CD8-positive, alpha-beta T cell (primary cell): ENCODE measurements at regions of chr20 and their contacts with region 1.

Region 1: GRCh38 chr20:21235484-21236445 is 67.4 kb upstream of the XRN2 start:
- DNase-seq: peak; percentile 18 to 70 (median 63)
- ATAC-seq: peak; percentile 68
- H3K4me3 ChIP-seq: no peak overlapping the region
- H3K4me3 Mint-ChIP-seq: no peak overlapping the region
- H3K27ac ChIP-seq: no peak overlapping the region
- H3K27ac Mint-ChIP-seq: no peak overlapping the region
- H3K4me1 ChIP-seq: no peaks in the 10 kb centered on the region
- H3K4me1 Mint-ChIP-seq: peaks cover 4% of the 10 kb centered on the region
- H3K27me3 ChIP-seq: no peaks in the 10 kb centered on the region
- H3K27me3 Mint-ChIP-seq: no peaks in the 10 kb centered on the region
- CTCF ChIP-seq: peak; percentile 94

Region 2: GRCh38 chr20:21219686-21220085 is 16.1 kb before region 1 on chr20:
- CTCF ChIA-PET with region 1: interaction called, 21 read pairs
- POLR2A ChIA-PET with region 1: no interaction called
- intact Hi-C with region 1: no loop called
- DNase-seq: no peak
- ATAC-seq: no peak
- H3K4me3 ChIP-seq: no peak overlapping the region
- H3K4me3 Mint-ChIP-seq: no peak overlapping the region
- H3K27ac ChIP-seq: no peak overlapping the region
- H3K27ac Mint-ChIP-seq: no peak overlapping the region
- H3K4me1 ChIP-seq: no peaks in the 10 kb centered on the region
- H3K4me1 Mint-ChIP-seq: no peaks in the 10 kb centered on the region
- H3K27me3 ChIP-seq: no peaks in the 10 kb centered on the region
- H3K27me3 Mint-ChIP-seq: no peaks in the 10 kb centered on the region
- CTCF ChIP-seq: no peak

Region 3: GRCh38 chr20:21246161-21246560 is 10.4 kb after region 1 on chr20:
- CTCF ChIA-PET with region 1: interaction called, 13 read pairs
- POLR2A ChIA-PET with region 1: interaction called, 3 read pairs
- intact Hi-C with region 1: no loop called
- DNase-seq: no peak
- ATAC-seq: no peak
- H3K4me3 ChIP-seq: no peak overlapping the region
- H3K4me3 Mint-ChIP-seq: no peak overlapping the region
- H3K27ac ChIP-seq: no peak overlapping the region
- H3K27ac Mint-ChIP-seq: no peak overlapping the region
- H3K4me1 ChIP-seq: no peaks in the 10 kb centered on the region
- H3K4me1 Mint-ChIP-seq: no peaks in the 10 kb centered on the region
- H3K27me3 ChIP-seq: no peaks in the 10 kb centered on the region
- H3K27me3 Mint-ChIP-seq: no peaks in the 10 kb centered on the region
- CTCF ChIP-seq: no peak

Region 4: DNA sequence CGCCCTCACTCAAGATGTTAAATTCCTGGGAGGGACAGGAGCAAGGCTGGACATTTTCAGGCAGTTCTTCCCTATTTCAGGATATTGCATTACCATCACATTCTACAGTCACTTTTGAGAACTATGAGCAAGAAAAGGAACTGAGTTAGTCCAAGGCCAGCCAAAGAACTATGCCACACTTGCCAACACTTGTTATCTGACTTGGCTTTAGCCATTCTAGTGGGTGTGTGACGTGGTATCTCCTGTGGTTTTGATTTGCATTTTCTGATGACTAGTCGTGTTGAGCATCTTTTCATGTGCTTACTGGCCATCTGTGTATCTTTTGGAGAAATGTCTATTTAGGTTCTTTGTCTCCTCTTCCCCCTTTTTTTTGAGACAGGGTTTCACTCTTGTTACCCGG is 79.4 kb after region 1 on chr20:
- CTCF ChIA-PET with region 1: no interaction called
- POLR2A ChIA-PET with region 1: no interaction called
- intact Hi-C with region 1: no loop called
- DNase-seq: peak in 1 of 9 experiments; percentile 22
- ATAC-seq: peak; percentile 36
- H3K4me3 ChIP-seq: no peak overlapping the region
- H3K4me3 Mint-ChIP-seq: no peak overlapping the region
- H3K27ac ChIP-seq: no peak overlapping the region
- H3K27ac Mint-ChIP-seq: no peak overlapping the region
- H3K4me1 ChIP-seq: peaks cover 44% of the 10 kb centered on the region
- H3K4me1 Mint-ChIP-seq: peaks cover 81% of the 10 kb centered on the region
- H3K27me3 ChIP-seq: no peaks in the 10 kb centered on the region
- H3K27me3 Mint-ChIP-seq: no peaks in the 10 kb centered on the region
- CTCF ChIP-seq: no peak

Region 5: GRCh38 chr20:21490095-21490494 is 254.3 kb after region 1 on chr20:
- CTCF ChIA-PET with region 1: interaction called, 17 read pairs
- POLR2A ChIA-PET with region 1: no interaction called
- intact Hi-C with region 1: no loop called
- DNase-seq: no peak
- ATAC-seq: no peak
- H3K4me3 ChIP-seq: no peak overlapping the region
- H3K4me3 Mint-ChIP-seq: no peak overlapping the region
- H3K27ac ChIP-seq: no peak overlapping the region
- H3K27ac Mint-ChIP-seq: no peak overlapping the region
- H3K4me1 ChIP-seq: no peaks in the 10 kb centered on the region
- H3K4me1 Mint-ChIP-seq: no peaks in the 10 kb centered on the region
- H3K27me3 ChIP-seq: no peaks in the 10 kb centered on the region
- H3K27me3 Mint-ChIP-seq: peaks cover 27% of the 10 kb centered on the region
- CTCF ChIP-seq: no peak

Region 6: GRCh38 chr20:21615617-21616080 is 379.9 kb after region 1 on chr20:
- CTCF ChIA-PET with region 1: interaction called, 11 read pairs
- POLR2A ChIA-PET with region 1: no interaction called
- intact Hi-C with region 1: loop called in 1 of 2 experiments (anchors 5 kb)
- DNase-seq: peak in 8 of 9 experiments; percentile 4 to 50 (median 25)
- ATAC-seq: no peak
- H3K4me3 ChIP-seq: no peak overlapping the region
- H3K4me3 Mint-ChIP-seq: no peak overlapping the region
- H3K27ac ChIP-seq: no peak overlapping the region
- H3K27ac Mint-ChIP-seq: no peak overlapping the region
- H3K4me1 ChIP-seq: no peaks in the 10 kb centered on the region
- H3K4me1 Mint-ChIP-seq: no peaks in the 10 kb centered on the region
- H3K27me3 ChIP-seq: peaks cover 0 to 4% of the 10 kb centered on the region in 2 experiments
- H3K27me3 Mint-ChIP-seq: peaks cover 17% of the 10 kb centered on the region
- CTCF ChIP-seq: peak; percentile 25